Activated CD8-positive, alpha-beta T cell treated with anti-CD3 and anti-CD28 coated beads, Interleukin-2, amount 10 ng/mL, durations not matched to agents 7 days and 5 days (primary cell): ENCODE measurements at regions of chr22 and their contacts with region 1.

Region 1: GRCh38 chr22:30224161-30224857 is 22.2 kb downstream of the LIF start:
- DNase-seq: no peak
- ATAC-seq: no peak
- H3K4me3 Mint-ChIP-seq: no peak overlapping the region
- H3K27ac Mint-ChIP-seq: peak overlapping the region; percentile 92
- H3K4me1 Mint-ChIP-seq: peaks cover 100% of the 10 kb centered on the region
- H3K27me3 Mint-ChIP-seq: no peaks in the 10 kb centered on the region

Region 2: DNA sequence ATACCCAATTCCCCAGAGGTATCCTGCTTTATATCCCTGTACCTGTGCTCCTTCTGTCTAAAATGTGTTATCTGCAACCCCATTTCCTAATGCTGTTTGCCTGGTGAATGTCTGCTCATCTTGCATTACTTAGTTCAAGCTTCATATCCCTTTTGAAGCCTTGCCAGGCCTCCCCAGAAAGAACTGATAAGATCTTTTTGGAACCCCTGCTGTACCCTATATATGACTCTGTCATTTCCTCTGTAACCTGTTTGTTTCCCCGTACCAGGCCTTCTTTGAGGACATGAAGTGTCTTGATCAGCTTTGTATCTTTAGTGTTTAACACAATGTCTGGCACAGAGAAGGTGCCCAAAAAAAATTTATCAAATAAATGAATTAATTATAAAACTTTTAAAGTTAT is 55.3 kb before region 1 on chr22:
- CTCF ChIA-PET with region 1: no interaction called
- POLR2A ChIA-PET with region 1: interaction called, 11 read pairs
- DNase-seq: no peak
- ATAC-seq: peak; percentile 84
- H3K4me3 Mint-ChIP-seq: no peak overlapping the region
- H3K27ac Mint-ChIP-seq: no peak overlapping the region
- H3K4me1 Mint-ChIP-seq: peaks cover 29% of the 10 kb centered on the region
- H3K27me3 Mint-ChIP-seq: no peaks in the 10 kb centered on the region

Region 3: DNA sequence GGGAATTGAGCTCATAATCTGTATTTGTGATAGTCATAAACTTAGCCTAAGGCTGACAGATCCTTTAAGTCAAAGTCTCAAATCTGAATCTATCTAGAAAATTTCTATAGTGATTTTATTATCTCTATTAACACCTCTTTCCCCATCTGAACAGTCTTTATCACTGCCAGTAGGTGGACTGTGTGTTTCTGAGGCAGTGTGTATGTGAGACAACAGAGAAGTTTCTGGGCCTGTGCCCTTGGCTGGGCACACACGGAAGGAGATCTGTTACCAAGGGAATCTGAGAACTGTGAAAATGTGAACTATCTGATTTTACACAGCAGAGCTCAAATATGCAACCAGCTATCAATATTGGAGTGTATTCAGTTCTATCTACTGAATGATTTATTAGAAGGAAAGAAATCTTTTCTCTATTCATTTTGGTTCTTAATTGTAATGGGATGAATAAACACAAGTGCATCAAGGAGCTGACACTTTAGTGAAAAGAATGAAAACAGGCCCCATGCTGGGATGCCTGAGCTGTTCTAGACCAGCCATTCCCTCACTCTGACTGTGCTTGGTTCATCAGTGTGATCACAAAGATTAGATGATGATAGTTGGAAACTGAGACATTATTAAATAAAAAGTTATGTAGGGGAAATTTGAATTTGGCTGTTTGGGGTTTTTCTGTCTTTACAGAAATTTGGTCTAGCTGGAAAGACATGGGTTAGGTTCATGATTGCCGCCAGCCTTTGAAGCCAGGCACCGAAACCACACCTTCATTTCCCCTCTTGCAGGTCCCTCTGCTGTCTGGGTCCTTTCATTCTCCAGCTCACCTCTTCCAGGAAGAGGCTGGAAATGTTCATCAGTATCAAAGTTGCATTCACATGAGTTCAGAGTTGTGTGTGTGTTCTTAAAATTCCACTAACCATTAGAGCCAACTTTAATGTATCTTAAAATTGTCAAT is 45.9 kb before region 1 on chr22:
- CTCF ChIA-PET with region 1: interaction called, 25 read pairs
- POLR2A ChIA-PET with region 1: interaction called, 17 read pairs
- DNase-seq: peak; percentile 74
- ATAC-seq: peak; percentile 82
- H3K4me3 Mint-ChIP-seq: peak overlapping the region; percentile 35
- H3K27ac Mint-ChIP-seq: peak overlapping the region; percentile 93
- H3K4me1 Mint-ChIP-seq: peaks cover 88% of the 10 kb centered on the region
- H3K27me3 Mint-ChIP-seq: no peaks in the 10 kb centered on the region

Region 4: GRCh38 chr22:30183861-30184278 is 40.4 kb before region 1 on chr22:
- CTCF ChIA-PET with region 1: interaction called, 25 read pairs
- POLR2A ChIA-PET with region 1: interaction called, 17 read pairs
- DNase-seq: peak; percentile 64
- ATAC-seq: peak; percentile 70
- H3K4me3 Mint-ChIP-seq: peak overlapping the region; percentile 55
- H3K27ac Mint-ChIP-seq: peak overlapping the region; percentile 96
- H3K4me1 Mint-ChIP-seq: peaks cover 94% of the 10 kb centered on the region
- H3K27me3 Mint-ChIP-seq: no peaks in the 10 kb centered on the region

Region 5: GRCh38 chr22:30196141-30196879 is 28.0 kb before region 1 on chr22:
- CTCF ChIA-PET with region 1: interaction called, 3 read pairs
- POLR2A ChIA-PET with region 1: interaction called, 10 read pairs
- DNase-seq: peak; percentile 81
- ATAC-seq: peak; percentile 72
- H3K4me3 Mint-ChIP-seq: peak overlapping the region; percentile 47
- H3K27ac Mint-ChIP-seq: peak overlapping the region; percentile 94
- H3K4me1 Mint-ChIP-seq: peaks cover 81% of the 10 kb centered on the region
- H3K27me3 Mint-ChIP-seq: no peaks in the 10 kb centered on the region

Region 6: GRCh38 chr22:30245985-30246901 is 21.9 kb after region 1 on chr22 and contains the start of gene LIF:
- CTCF ChIA-PET with region 1: no interaction called
- POLR2A ChIA-PET with region 1: interaction called, 21 read pairs
- DNase-seq: peak; percentile 76
- ATAC-seq: peak; percentile 64
- H3K4me3 Mint-ChIP-seq: peak within 1 kb of the TSS; percentile 99
- H3K27ac Mint-ChIP-seq: peak within 1 kb of the TSS; percentile 98
- H3K4me1 Mint-ChIP-seq: peaks cover 74% of the 10 kb centered on the region
- H3K27me3 Mint-ChIP-seq: no peaks in the 10 kb centered on the region
- total RNA-seq, gene LIF: 532 to 569 TPM

Region 7: GRCh38 chr22:30305519-30305905 is 81.2 kb after region 1 on chr22:
- CTCF ChIA-PET with region 1: no interaction called
- POLR2A ChIA-PET with region 1: no interaction called
- DNase-seq: peak; percentile 81
- ATAC-seq: peak; percentile 79
- H3K4me3 Mint-ChIP-seq: peak overlapping the region; percentile 81
- H3K27ac Mint-ChIP-seq: peak overlapping the region; percentile 93
- H3K4me1 Mint-ChIP-seq: peaks cover 100% of the 10 kb centered on the region
- H3K27me3 Mint-ChIP-seq: no peaks in the 10 kb centered on the region